Heart right ventricle (tissue), 16 donors: ENCODE measurements at regions of chr13 and their contacts with region 1.

Region 1: DNA sequence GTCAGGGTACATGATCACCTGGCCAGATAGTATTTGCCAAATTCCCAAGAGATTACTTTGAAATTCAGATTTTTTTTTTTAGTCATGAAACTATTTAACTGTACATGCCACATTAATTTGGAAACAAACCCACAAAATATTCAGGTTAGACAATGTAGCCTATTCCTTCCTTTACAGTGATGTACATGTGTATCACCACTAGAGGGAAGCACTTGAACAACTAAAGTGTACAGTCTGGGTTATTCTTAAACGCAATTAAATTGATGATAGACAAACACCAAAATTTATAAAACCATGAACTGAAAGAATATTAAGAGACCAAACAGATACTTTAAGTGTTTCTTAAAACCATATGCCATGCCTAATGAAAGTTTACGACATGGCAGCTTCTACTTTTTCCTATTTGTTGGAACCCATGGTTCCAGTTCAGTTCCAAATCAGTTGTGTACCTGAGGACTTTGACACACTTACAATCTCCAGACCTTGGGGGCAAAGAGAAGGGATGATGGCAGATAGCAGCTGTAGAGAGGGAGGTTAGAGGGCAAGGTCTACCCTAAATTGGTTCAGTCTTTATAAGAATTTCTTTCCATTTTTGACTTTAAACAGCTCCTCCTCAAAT is 52.8 kb downstream of the TNFSF13B start:
- DNase-seq: no peak
- ATAC-seq: peak in 5 of 8 donors; percentile 61 to 73 (median 66)
- H3K4me3 ChIP-seq: no peak overlapping the region
- H3K27ac ChIP-seq: peak overlapping the region in 1 of 10 donors; percentile 17
- H3K4me1 ChIP-seq: peaks cover 0 to 24% (median 0%) of the 10 kb centered on the region in 9 donors
- H3K27me3 ChIP-seq: peaks cover 0 to 31% (median 9%) of the 10 kb centered on the region in 7 donors
- CTCF ChIP-seq: peak; percentile 44 to 85 (median 79)

Region 2: GRCh38 chr13:108227651-108228272 is 94.6 kb before region 1 on chr13:
- intact Hi-C with region 1: loop called in 3 of 10 experiments (anchors 5 to 10 kb)
- DNase-seq: peak in 1 of 2 donors; percentile 24
- ATAC-seq: no peak
- H3K4me3 ChIP-seq: no peak overlapping the region
- H3K27ac ChIP-seq: no peak overlapping the region
- H3K4me1 ChIP-seq: peaks cover 4 to 54% (median 38%) of the 10 kb centered on the region in 9 donors
- H3K27me3 ChIP-seq: no peaks in the 10 kb centered on the region
- CTCF ChIP-seq: peak; percentile 73 to 87 (median 81)

Region 3: DNA sequence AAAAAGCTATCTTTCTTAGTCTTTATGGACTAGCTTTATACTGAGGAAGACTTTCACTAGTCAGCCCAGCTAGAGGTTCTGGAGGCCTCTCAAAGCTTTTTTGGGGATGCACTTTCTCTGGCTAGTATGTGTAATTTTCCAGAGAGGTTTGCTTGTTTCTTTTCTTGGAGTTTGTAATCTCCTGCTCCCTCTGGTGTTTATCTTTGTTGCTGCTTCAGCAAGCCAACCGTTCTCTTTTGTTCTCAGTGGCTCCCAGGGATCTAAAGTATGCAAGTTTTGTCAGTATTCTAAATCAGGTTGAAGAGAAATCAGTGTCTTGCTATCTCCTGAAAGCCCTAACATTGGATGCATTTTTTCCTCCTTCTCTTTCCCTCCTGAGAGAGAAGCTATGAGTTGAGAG is 185.9 kb after region 1 on chr13:
- intact Hi-C with region 1: loop called in 2 of 10 experiments (anchors 10 kb)
- DNase-seq: no peak
- ATAC-seq: no peak
- H3K4me3 ChIP-seq: no peak overlapping the region
- H3K27ac ChIP-seq: no peak overlapping the region
- H3K4me1 ChIP-seq: no peaks in the 10 kb centered on the region
- H3K27me3 ChIP-seq: no peaks in the 10 kb centered on the region
- CTCF ChIP-seq: peak in 8 of 9 donors; percentile 6 to 54 (median 38)

Region 4: GRCh38 chr13:108609353-108609752 is 287.0 kb after region 1 on chr13:
- intact Hi-C with region 1: loop called in 1 of 10 experiments (anchors 10 kb)
- DNase-seq: no peak
- ATAC-seq: peak in 2 of 8 donors; percentile 64 to 69
- H3K4me3 ChIP-seq: no peak overlapping the region
- H3K27ac ChIP-seq: no peak overlapping the region
- H3K4me1 ChIP-seq: peaks cover 0 to 7% (median 0%) of the 10 kb centered on the region in 9 donors
- H3K27me3 ChIP-seq: no peaks in the 10 kb centered on the region
- CTCF ChIP-seq: peak; percentile 19 to 63 (median 56)

Region 5: DNA sequence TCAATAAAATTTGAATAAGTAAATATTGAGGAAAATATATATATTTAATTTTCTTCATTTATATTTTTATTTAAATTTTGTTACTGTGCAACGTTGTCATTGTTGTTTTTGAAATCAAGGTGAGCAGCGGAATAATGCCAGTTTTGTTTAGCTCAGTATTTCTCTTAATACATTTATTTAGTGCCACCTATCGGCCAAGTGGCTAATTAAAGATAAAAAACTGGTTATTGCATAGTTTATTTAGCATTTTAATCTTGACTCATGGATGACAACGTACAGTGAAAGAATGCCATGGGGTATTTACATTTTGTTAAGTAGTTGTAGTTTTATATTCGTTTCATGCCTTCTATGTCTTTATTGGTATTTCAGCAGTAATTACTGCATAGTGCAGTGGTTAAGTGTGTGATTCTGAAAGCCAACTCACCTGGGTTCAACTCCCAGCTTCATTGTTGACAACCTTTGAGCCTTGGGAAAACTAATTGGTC is 572.9 kb after region 1 on chr13:
- intact Hi-C with region 1: loop called in 8 of 10 experiments (anchors 2 to 10 kb)
- DNase-seq: no peak
- ATAC-seq: no peak
- H3K4me3 ChIP-seq: no peak overlapping the region
- H3K27ac ChIP-seq: no peak overlapping the region
- H3K4me1 ChIP-seq: no peaks in the 10 kb centered on the region
- H3K27me3 ChIP-seq: peaks cover 0 to 9% (median 0%) of the 10 kb centered on the region in 7 donors
- CTCF ChIP-seq: peak; percentile 23 to 75 (median 62)